HEK293 (cell line): ENCODE measurements at regions of chr15 and their contacts with region 1.

Region 1: DNA sequence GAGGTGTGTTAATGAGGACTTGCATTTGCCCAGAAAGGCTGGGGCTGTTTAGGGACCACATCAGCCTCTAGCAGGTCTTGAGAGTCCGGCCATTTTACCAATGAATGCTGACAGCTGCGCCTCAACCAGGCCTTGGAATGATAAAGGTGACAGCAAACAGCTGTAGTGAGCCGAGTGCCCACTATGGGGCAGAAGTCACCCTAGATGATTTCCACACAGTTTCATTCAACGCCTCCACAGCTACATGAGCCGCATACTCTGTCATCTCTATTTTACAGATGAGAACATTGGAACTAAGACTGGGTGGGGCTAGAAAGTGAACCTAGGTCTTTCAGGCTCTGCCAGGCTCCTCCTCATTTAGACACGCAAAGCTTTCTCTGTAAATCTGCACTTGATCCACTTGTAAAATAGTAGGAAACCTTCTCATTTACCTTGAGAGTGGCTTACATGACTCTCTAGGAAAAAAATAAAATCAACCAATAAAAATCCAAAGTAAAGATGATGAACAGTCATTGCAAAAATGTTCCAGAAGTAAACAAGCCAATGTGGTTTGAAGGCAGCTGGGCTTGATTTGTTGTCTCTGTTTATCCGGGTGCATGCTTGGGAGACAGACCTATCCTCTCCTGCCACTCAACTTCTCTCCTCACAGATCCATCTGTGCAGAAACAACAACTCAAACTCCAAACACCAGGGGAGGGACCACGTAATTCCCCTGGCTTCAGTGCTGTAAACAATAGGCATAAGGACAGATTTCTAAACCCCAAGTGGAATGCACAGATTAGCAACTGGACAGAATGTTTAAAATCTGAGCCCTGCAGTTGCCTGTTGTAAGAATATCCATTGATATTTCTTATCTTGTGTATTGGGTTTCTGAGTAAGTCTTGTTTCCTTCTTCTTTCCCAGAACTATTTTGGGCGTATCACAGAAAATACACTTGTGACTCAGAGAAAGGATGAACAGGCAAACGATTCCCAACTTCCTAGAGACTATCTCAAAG is 31.5 kb upstream of the LDHAL6B start:
- H3K4me3 ChIP-seq: no peak overlapping the region
- H3K27ac ChIP-seq: no peak overlapping the region
- H3K4me1 ChIP-seq: no peaks in the 10 kb centered on the region
- CTCF ChIP-seq: 0 out of 2 replicates have a peak, but pooled peaks have one; percentile 13

Region 2: DNA sequence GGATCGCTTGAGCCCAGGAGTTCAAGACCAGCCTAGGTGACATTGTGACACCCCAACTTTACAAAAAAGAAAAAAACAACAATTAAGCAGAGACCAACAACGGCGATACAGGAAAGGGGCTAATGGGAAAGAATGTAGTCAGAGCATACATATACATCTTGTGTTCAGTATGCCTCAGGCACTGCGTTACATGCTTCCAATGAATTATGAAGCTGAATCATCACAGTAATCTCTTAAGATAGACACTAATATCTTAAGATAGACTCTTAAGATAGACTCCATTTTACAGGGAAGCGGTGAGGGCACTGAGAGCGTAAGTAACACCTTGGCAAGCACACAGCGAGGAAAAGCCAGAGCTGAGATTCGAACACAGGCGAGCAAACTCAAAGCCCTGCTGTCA is 25.4 kb after region 1 on chr15:
- CTCF ChIA-PET with region 1: no interaction called
- POLR2A ChIA-PET with region 1: no interaction called
- H3K4me3 ChIP-seq: no peak overlapping the region
- H3K27ac ChIP-seq: peak overlapping the region; percentile 61
- H3K4me1 ChIP-seq: peaks cover 7% of the 10 kb centered on the region
- CTCF ChIP-seq: no peak

Region 3: GRCh38 chr15:59255647-59256380 is 80.7 kb after region 1 on chr15:
- CTCF ChIA-PET with region 1: no interaction called
- POLR2A ChIA-PET with region 1: no interaction called
- H3K4me3 ChIP-seq: no peak overlapping the region
- H3K27ac ChIP-seq: no peak overlapping the region
- H3K4me1 ChIP-seq: 0 out of 2 replicates have a peak, but pooled peaks cover 2% of the 10 kb centered on the region
- CTCF ChIP-seq: no peak

Region 4: GRCh38 chr15:59304034-59304795 is 129.1 kb after region 1 on chr15:
- CTCF ChIA-PET with region 1: no interaction called
- POLR2A ChIA-PET with region 1: interaction called, 10 read pairs
- H3K4me3 ChIP-seq: no peak overlapping the region
- H3K27ac ChIP-seq: no peak overlapping the region
- H3K4me1 ChIP-seq: peaks cover 17% of the 10 kb centered on the region
- CTCF ChIP-seq: no peak